Naive thymus-derived CD4-positive, alpha-beta T cell (primary cell): ENCODE measurements at regions of chr10 and their contacts with region 1.

Region 1: DNA sequence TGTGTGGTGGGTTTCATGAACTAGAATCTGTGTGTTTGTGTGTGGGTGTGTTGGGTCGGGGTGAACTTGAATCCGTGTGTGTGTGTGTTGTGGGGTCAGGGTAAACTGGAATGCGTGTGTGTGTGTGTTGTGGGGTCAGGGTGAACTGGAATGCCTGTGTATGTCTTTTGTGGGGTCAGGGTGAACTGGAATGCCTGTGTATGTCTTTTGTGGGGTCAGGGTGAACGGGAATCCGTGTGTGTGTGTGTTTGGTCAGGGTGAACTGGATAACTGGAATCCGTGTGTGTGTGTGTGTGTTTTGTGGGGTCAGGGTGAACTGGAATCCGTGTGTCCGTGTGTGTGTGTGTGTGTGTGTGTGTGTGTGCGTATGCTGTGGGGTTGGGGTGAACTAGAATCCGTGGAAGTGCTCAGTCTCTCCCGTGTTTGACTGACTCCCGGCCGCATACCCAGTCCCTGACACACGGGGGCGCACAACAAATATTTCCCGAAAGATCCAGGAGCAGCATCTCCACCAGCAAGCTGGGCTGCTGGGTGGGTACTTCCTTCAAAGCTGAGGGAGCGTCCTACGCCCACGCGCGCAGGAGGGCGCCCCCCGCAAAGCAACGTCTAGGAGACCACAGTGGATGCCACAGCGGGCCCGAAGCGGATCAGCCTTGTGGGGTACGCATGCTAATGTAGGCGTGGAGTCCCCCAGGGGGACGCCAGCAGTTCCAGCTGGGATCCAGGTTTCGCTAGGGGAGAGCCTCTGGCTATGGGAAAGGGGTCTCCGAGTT is 836 bp upstream of the CASP7 start:
- DNase-seq: peak; percentile 32 to 73 (median 51)
- ATAC-seq: peak; percentile 55
- H3K4me3 ChIP-seq: peak overlapping the region; percentile 96
- H3K4me3 Mint-ChIP-seq: peak overlapping the region; percentile 90 to 100 (median 94)
- H3K27ac ChIP-seq: peak overlapping the region; percentile 70
- H3K27ac Mint-ChIP-seq: peak overlapping the region; percentile 56 to 96 (median 90)
- H3K4me1 ChIP-seq: peaks cover 6 to 11% of the 10 kb centered on the region in 2 donors
- H3K4me1 Mint-ChIP-seq: peaks cover 36 to 44% (median 40%) of the 10 kb centered on the region in 7 donors
- H3K27me3 ChIP-seq: no peaks in the 10 kb centered on the region
- H3K27me3 Mint-ChIP-seq: peaks cover 0 to 17% (median 3%) of the 10 kb centered on the region in 5 donors

Region 2: GRCh38 chr10:112183329-112184051 is 1495.4 kb before region 1 on chr10 and contains the start of gene GPAM:
- CTCF ChIA-PET with region 1: no interaction called
- POLR2A ChIA-PET with region 1: no interaction called
- intact Hi-C with region 1: loop called in 1 of 2 experiments (anchors 10 kb)
- DNase-seq: peak; percentile 93 to 100 (median 97)
- ATAC-seq: peak; percentile 100
- H3K4me3 ChIP-seq: peak within 1 kb of the TSS; percentile 88
- H3K4me3 Mint-ChIP-seq: peak within 1 kb of the TSS; percentile 87 to 98 (median 92)
- H3K27ac ChIP-seq: peak within 1 kb of the TSS; percentile 75
- H3K27ac Mint-ChIP-seq: peak within 1 kb of the TSS; percentile 84 to 99 (median 94)
- H3K4me1 ChIP-seq: peaks cover 7 to 8% of the 10 kb centered on the region in 2 donors
- H3K4me1 Mint-ChIP-seq: peaks cover 13 to 34% (median 27%) of the 10 kb centered on the region in 7 donors
- H3K27me3 ChIP-seq: no peaks in the 10 kb centered on the region
- H3K27me3 Mint-ChIP-seq: peaks cover 0 to 11% (median 0%) of the 10 kb centered on the region in 5 donors
- total RNA-seq, gene GPAM: 3.7 to 11.3 (median 6.6) TPM

Region 3: DNA sequence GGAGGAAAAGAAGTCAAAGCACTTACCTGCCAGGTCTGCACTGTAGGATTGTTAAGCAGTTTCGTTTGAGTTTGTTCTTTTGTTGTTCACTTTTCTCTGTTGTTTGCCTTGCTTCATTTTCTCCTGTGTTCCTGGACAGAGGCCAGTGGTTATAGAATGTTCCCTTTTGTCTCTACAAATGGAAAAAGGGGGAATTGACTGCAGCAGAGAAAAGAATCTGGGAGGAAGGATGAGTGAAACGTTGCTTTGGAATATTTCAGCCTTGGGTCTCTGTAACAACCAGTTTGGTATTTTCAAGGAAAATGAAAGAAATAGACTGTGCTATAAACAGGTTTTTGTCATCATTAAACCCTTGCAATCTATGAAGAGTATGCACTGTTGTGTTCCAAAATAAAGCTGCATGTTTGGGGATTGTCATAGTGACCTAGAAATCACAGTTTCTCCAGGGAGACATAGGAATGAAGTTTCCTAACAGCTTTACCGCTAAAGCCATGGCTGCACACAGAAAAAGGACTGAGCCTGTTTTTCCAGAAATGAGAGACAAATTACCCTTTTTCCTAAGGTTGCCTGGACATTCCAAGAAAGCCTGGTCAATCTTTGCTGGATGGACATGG is 186.8 kb before region 1 on chr10:
- CTCF ChIA-PET with region 1: no interaction called
- POLR2A ChIA-PET with region 1: no interaction called
- intact Hi-C with region 1: no loop called
- DNase-seq: no peak
- ATAC-seq: no peak
- H3K4me3 ChIP-seq: no peak overlapping the region
- H3K4me3 Mint-ChIP-seq: no peak overlapping the region
- H3K27ac ChIP-seq: no peak overlapping the region
- H3K27ac Mint-ChIP-seq: no peak overlapping the region
- H3K4me1 ChIP-seq: no peaks in the 10 kb centered on the region
- H3K4me1 Mint-ChIP-seq: no peaks in the 10 kb centered on the region
- H3K27me3 ChIP-seq: no peaks in the 10 kb centered on the region
- H3K27me3 Mint-ChIP-seq: peaks cover 4 to 31% (median 13%) of the 10 kb centered on the region in 5 donors

Region 4: GRCh38 chr10:113689057-113689456 is 10.2 kb after region 1 on chr10:
- CTCF ChIA-PET with region 1: no interaction called
- POLR2A ChIA-PET with region 1: interaction called, 3 read pairs
- intact Hi-C with region 1: loop called in 1 of 2 experiments (anchors 1 kb)
- DNase-seq: no peak
- ATAC-seq: no peak
- H3K4me3 ChIP-seq: no peak overlapping the region
- H3K4me3 Mint-ChIP-seq: peak overlapping the region in 3 of 10 donors; percentile 1 to 75 (median 34)
- H3K27ac ChIP-seq: no peak overlapping the region
- H3K27ac Mint-ChIP-seq: peak overlapping the region in 1 of 9 donors; percentile 85
- H3K4me1 ChIP-seq: peaks cover 0 to 7% of the 10 kb centered on the region in 2 donors
- H3K4me1 Mint-ChIP-seq: peaks cover 17 to 48% (median 27%) of the 10 kb centered on the region in 7 donors
- H3K27me3 ChIP-seq: no peaks in the 10 kb centered on the region
- H3K27me3 Mint-ChIP-seq: no peaks in the 10 kb centered on the region

Region 5: DNA sequence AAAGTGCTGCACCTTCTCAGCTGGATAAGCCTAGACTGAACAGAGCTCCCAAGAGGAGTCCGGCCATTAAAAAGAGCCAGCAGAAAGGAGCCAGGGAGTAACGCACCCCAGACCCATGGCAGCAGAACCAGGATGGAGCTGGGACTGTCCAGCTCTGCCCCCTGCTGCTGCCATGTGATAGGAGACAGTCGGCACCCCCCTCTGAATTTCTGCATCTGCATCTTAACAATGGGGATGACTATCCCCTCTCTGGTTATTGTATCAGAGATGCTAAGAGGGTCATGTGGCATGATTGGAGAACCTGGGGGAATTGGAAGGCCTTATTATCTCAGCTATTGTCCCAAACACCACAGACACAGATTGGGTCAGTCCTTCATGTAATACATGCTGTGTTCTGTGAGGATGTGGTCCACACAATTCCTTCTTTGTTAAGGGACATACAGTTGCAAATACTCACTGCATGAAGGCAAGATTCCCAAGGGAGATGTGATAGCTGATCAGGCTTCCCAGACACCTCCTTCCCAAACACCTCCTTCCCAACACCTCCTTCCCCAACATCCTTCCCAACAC is 101.9 kb after region 1 on chr10:
- CTCF ChIA-PET with region 1: no interaction called
- POLR2A ChIA-PET with region 1: no interaction called
- intact Hi-C with region 1: loop called in 1 of 2 experiments (anchors 2 kb)
- DNase-seq: no peak
- ATAC-seq: no peak
- H3K4me3 ChIP-seq: no peak overlapping the region
- H3K4me3 Mint-ChIP-seq: no peak overlapping the region
- H3K27ac ChIP-seq: no peak overlapping the region
- H3K27ac Mint-ChIP-seq: no peak overlapping the region
- H3K4me1 ChIP-seq: no peaks in the 10 kb centered on the region
- H3K4me1 Mint-ChIP-seq: peaks cover 0 to 2% (median 0%) of the 10 kb centered on the region in 7 donors
- H3K27me3 ChIP-seq: no peaks in the 10 kb centered on the region
- H3K27me3 Mint-ChIP-seq: peaks cover under 1 to 22% (median 7%) of the 10 kb centered on the region in 5 donors

Region 6: DNA sequence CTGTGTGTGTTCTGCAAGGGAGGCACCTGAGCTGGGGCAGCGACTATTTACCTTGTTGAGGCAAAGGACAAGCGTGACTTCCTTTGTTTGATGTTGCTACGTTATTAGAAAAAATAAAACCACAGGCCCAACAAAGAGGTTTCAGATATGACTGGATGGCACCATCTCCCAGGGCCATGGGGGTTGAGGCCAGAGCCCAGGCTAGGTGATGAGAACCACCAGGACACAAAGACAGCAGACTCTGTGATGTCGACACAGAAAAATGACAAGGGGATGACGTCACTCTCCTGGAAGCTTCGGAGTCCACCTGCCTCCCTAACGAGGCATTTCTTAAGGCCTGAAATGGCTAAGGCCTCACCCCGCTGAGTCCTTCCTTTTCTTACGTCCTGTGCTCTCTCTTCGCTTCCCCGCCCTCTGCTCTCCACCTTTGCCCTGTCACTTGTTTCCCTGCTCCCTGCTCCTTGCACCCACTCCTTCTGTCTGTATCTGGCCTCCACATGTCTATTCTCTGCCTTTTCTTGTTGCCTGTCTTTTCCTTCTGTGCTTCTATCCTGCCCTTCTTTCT is 281.8 kb after region 1 on chr10:
- CTCF ChIA-PET with region 1: no interaction called
- POLR2A ChIA-PET with region 1: no interaction called
- intact Hi-C with region 1: loop called in 1 of 2 experiments (anchors 1 kb)
- DNase-seq: peak in 5 of 9 donors; percentile 4 to 34 (median 21)
- ATAC-seq: no peak
- H3K4me3 ChIP-seq: peak overlapping the region; percentile 27
- H3K4me3 Mint-ChIP-seq: peak overlapping the region; percentile 31 to 79 (median 67)
- H3K27ac ChIP-seq: no peak overlapping the region
- H3K27ac Mint-ChIP-seq: peak overlapping the region in 8 of 9 donors; percentile 30 to 92 (median 82)
- H3K4me1 ChIP-seq: peaks cover 37 to 47% of the 10 kb centered on the region in 2 donors
- H3K4me1 Mint-ChIP-seq: peaks cover 26 to 64% (median 49%) of the 10 kb centered on the region in 7 donors
- H3K27me3 ChIP-seq: no peaks in the 10 kb centered on the region
- H3K27me3 Mint-ChIP-seq: peaks cover 0 to 27% (median 6%) of the 10 kb centered on the region in 5 donors

Region 7: DNA sequence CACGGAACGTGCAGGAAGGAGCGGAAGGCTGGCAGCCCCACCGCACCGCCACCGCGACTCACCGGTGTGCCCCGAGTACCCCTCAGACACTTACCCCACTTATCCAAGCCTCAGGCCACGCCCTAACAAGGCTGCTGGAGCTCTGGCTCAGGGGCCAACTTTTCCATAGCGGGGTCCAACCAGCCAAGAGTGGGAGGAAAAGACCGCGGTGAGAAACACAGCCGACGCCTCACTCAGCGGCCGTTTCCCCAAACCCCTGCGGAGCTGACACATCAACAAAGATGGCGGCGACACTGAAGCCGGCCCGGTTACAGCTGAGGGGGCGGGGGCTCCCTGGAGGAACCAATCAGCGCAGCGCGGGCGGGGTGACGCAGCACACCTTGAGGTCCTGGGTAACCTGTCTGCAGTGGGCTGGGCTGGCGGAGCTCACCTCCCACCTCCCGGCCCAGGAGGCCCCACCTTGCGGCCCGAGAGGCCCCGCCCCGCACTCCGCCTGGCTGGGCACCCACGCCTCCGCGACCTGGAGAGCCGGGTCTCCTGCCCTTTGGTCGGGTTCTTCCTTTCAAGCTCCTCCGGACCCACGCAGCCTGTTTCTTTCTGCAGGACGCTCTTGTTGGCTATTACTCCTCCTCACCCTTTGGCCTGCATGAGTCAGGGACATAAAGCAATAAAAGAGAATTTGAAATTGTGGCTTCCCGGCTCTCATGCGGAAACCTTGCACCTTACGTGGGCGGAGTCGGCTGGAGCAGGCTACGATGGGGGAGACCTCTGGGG is 495.2 kb after region 1 on chr10 and contains the start of gene CCDC186:
- CTCF ChIA-PET with region 1: no interaction called
- POLR2A ChIA-PET with region 1: no interaction called
- intact Hi-C with region 1: loop called (anchors 1 kb)
- DNase-seq: peak; percentile 90 to 98 (median 97)
- ATAC-seq: peak; percentile 98
- H3K4me3 ChIP-seq: peak within 1 kb of the TSS; percentile 83
- H3K4me3 Mint-ChIP-seq: peak within 1 kb of the TSS; percentile 88 to 100 (median 96)
- H3K27ac ChIP-seq: peak within 1 kb of the TSS; percentile 88
- H3K27ac Mint-ChIP-seq: peak within 1 kb of the TSS; percentile 92 to 99 (median 98)
- H3K4me1 ChIP-seq: peaks cover 0 to 8% of the 10 kb centered on the region in 2 donors
- H3K4me1 Mint-ChIP-seq: peaks cover 17 to 51% (median 33%) of the 10 kb centered on the region in 7 donors
- H3K27me3 ChIP-seq: no peaks in the 10 kb centered on the region
- H3K27me3 Mint-ChIP-seq: peaks cover 0 to 24% (median 0%) of the 10 kb centered on the region in 5 donors
- total RNA-seq, gene CCDC186: 18.6 to 42.9 (median 34.5) TPM